Activated CD4-positive, alpha-beta memory T cell treated with anti-CD3 and anti-CD28 coated beads for 36 hours (primary cell): ENCODE measurements at regions of chr14 and their contacts with region 1.

Region 1: DNA sequence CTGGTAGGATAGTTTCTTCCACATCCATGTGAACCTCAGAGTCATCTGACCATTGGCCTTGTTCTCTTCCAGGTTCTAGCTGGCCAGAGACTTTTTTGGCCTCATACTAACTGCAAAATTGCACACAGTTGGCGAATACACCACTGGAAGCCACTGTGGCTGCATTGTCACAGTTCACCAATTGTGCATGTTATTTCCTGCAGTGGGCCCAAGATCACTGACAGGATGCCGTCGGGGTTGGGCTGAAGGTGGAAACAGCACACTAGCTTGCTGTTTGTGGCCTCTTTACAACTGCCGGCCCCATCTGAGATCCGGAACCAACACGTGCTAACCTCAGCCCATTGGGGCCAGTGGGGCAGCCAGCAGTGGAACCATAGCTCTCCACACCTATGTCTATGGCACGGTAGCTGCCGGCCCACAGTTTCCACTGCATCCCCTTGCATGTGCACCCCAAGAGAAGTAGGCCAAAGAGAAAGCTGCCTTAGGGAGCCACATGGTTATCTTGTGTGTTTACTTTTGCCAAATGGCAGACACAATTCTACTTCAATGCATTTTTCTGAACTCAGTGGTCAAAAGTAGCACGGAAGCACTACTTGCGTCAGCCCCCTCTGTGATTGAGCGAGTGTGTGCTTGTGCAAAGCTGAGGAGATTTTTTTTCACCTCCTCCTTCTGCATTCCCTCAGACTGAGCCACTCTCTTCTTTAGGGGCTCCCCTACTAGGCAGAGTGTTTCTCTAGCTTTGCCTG is 464.0 kb downstream of the RAD51B start:
- DNase-seq: peak; percentile 68
- H3K4me3 Mint-ChIP-seq: no peak overlapping the region
- H3K27ac Mint-ChIP-seq: peak overlapping the region; percentile 34
- H3K4me1 Mint-ChIP-seq: peaks cover 69% of the 10 kb centered on the region
- H3K27me3 Mint-ChIP-seq: no peaks in the 10 kb centered on the region

Region 2: DNA sequence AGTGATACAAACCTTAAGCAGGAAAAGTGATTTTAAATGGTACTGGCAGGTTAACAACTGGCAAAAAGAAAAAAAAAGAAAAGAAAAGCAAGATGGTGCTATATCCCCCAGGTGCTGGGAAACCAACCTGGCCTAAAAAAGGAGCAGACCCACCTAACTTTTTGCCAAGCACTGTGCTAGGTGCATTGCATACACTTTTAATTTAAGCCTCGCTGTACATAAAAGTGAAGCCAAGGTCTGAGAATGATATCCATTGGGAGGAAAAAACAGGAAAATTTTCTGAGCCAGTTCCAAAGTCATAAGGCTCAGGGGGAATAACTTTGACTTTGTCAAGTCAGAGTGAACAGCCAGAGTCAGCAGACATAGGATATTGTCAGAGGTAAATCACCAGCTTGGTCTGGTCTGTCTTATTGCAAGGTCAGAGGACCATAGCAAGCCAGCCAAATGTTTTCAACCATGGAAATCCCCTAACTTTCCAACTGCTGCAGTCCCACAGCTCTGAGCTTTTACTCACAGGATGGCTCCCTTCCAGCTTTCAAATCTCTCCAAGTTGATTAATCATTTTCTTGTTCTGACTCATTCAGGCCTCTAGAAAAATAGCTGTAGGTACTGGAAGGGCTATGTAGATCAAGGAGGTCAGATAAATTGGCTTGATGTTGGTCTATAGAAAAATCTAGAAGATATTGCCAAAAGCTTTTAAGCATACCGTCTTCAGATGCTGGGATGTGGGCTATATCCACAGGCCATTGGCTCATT is 51.1 kb before region 1 on chr14:
- CTCF ChIA-PET with region 1: no interaction called
- POLR2A ChIA-PET with region 1: no interaction called
- intact Hi-C with region 1: loop called (anchors 5 kb)
- DNase-seq: peak; percentile 64
- H3K4me3 Mint-ChIP-seq: no peak overlapping the region
- H3K27ac Mint-ChIP-seq: no peak overlapping the region
- H3K4me1 Mint-ChIP-seq: peaks cover 22% of the 10 kb centered on the region
- H3K27me3 Mint-ChIP-seq: no peaks in the 10 kb centered on the region

Region 3: GRCh38 chr14:68312884-68313610 is 29.5 kb after region 1 on chr14:
- CTCF ChIA-PET with region 1: interaction called, 5 read pairs
- POLR2A ChIA-PET with region 1: interaction called, 8 read pairs
- intact Hi-C with region 1: loop called (anchors 1 kb)
- DNase-seq: peak; percentile 75
- H3K4me3 Mint-ChIP-seq: no peak overlapping the region
- H3K27ac Mint-ChIP-seq: no peak overlapping the region
- H3K4me1 Mint-ChIP-seq: peaks cover 32% of the 10 kb centered on the region
- H3K27me3 Mint-ChIP-seq: peaks cover 3% of the 10 kb centered on the region

Region 4: GRCh38 chr14:68328509-68328908 is 45.0 kb after region 1 on chr14:
- CTCF ChIA-PET with region 1: no interaction called
- POLR2A ChIA-PET with region 1: no interaction called
- intact Hi-C with region 1: no loop called
- DNase-seq: no peak
- H3K4me3 Mint-ChIP-seq: no peak overlapping the region
- H3K27ac Mint-ChIP-seq: no peak overlapping the region
- H3K4me1 Mint-ChIP-seq: no peaks in the 10 kb centered on the region
- H3K27me3 Mint-ChIP-seq: no peaks in the 10 kb centered on the region

Region 5: GRCh38 chr14:68408680-68409079 is 125.1 kb after region 1 on chr14:
- CTCF ChIA-PET with region 1: no interaction called
- POLR2A ChIA-PET with region 1: interaction called, 3 read pairs
- intact Hi-C with region 1: loop called (anchors 10 kb)
- DNase-seq: no peak
- H3K4me3 Mint-ChIP-seq: no peak overlapping the region
- H3K27ac Mint-ChIP-seq: no peak overlapping the region
- H3K4me1 Mint-ChIP-seq: peaks cover 23% of the 10 kb centered on the region
- H3K27me3 Mint-ChIP-seq: no peaks in the 10 kb centered on the region

Region 6: GRCh38 chr14:68427550-68427890 is 144.0 kb after region 1 on chr14:
- CTCF ChIA-PET with region 1: no interaction called
- POLR2A ChIA-PET with region 1: no interaction called
- intact Hi-C with region 1: no loop called
- DNase-seq: no peak
- H3K4me3 Mint-ChIP-seq: no peak overlapping the region
- H3K27ac Mint-ChIP-seq: no peak overlapping the region
- H3K4me1 Mint-ChIP-seq: no peaks in the 10 kb centered on the region
- H3K27me3 Mint-ChIP-seq: no peaks in the 10 kb centered on the region

Region 7: GRCh38 chr14:68795597-68796417 is 512.3 kb after region 1 on chr14:
- CTCF ChIA-PET with region 1: interaction called, 3 read pairs
- POLR2A ChIA-PET with region 1: interaction called, 10 read pairs
- intact Hi-C with region 1: loop called (anchors 5 kb)
- DNase-seq: peak; percentile 87
- H3K4me3 Mint-ChIP-seq: peak overlapping the region; percentile 89
- H3K27ac Mint-ChIP-seq: peak overlapping the region; percentile 99
- H3K4me1 Mint-ChIP-seq: peaks cover 48% of the 10 kb centered on the region
- H3K27me3 Mint-ChIP-seq: no peaks in the 10 kb centered on the region